Panc1 (cell line): ENCODE measurements at regions of chr6 and their contacts with region 1.

Region 1: DNA sequence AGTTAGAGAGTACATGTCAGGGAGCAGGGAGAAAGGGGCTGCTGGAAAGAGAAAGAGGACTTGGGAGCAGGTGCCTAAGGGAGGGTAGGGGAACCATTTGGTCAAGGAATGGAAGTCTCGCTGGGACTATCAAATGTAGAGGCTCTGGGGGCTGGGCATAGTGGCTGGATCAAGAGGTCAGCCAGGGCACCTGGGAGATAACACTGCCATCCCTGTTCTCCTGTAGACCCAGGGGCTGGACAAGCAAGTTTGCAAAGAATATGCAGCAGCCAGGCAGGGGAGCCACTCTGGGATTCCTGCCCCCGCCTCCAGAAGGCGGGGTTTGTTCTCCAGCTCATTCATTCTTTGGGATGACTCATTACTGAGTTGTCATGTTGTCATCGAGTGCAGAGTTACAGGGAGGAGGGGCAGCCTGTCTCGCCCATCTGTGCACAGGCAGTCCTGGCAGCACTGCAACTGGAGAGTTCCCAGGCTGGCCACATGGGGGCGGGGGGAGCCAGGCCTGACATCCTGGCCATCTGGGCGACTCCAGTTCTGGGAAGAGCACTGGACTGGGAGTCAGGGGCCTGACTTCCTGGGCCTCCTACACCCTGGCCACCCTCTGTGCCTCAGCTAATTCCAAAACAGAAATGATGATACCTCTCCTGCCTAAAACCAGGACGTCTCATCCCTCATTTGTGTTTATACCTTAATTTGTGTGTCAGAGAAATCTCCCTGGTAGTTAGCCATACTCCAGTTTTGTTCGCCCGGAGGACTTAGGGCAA is 28.2 kb upstream of the ZFAND3 start:
- DNase-seq: peak; percentile 86
- ATAC-seq: peak; percentile 98
- H3K4me3 ChIP-seq: no peak overlapping the region
- H3K27ac ChIP-seq: no peak overlapping the region
- H3K4me1 ChIP-seq: peaks cover 7% of the 10 kb centered on the region; the same call in 1 of the 2 replicates
- H3K27me3 ChIP-seq: no peaks in the 10 kb centered on the region
- CTCF ChIP-seq: peak; percentile 97

Region 2: GRCh38 chr6:37818536-37819176 is 27.3 kb after region 1 on chr6:
- CTCF ChIA-PET with region 1: interaction called, 5 read pairs
- POLR2A ChIA-PET with region 1: interaction called, 16 read pairs
- in situ Hi-C with region 1: no loop called
- intact Hi-C with region 1: no loop called
- DNase-seq: peak; percentile 48
- ATAC-seq: peak; percentile 82
- H3K4me3 ChIP-seq: peak overlapping the region; percentile 84 to 89
- H3K27ac ChIP-seq: peak overlapping the region; percentile 100
- H3K4me1 ChIP-seq: peaks cover 27% of the 10 kb centered on the region
- H3K27me3 ChIP-seq: no peaks in the 10 kb centered on the region
- CTCF ChIP-seq: no peak

Region 3: DNA sequence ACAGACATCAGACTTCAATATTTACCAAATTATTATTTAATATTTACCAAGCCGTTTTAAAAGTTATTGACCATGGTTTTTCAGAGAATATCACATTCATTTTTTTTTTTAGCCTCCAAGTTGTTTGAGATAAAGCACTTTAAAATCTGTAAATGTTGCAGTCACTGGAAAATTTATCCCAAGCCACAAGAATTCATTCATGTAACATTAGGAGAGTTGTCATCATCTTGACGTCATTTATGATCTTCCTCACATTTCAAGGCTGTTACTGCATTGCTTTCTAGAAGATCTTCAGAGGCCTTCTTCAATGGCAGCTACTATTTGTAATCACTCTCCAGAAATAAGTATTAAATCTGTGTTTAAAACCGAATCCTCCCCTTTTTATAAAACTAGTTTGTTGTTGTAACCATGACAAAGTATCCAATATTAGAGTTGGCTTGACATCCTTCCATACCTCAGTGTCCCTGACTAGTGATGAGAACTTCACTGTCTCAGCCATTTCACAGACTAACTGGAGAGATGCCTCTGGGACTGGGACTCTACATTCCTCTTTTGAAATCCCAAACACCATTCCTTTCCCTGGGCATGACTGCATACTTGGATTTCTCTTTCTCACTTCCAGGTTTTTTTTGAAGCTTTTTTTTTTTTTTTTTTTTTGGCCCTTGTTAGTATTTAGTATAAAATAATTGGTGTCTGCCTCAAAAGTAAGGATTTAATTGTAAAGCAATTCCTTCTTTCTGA is 128.2 kb after region 1 on chr6:
- CTCF ChIA-PET with region 1: no interaction called
- POLR2A ChIA-PET with region 1: no interaction called
- in situ Hi-C with region 1: no loop called
- intact Hi-C with region 1: no loop called
- DNase-seq: no peak
- ATAC-seq: no peak
- H3K4me3 ChIP-seq: no peak overlapping the region
- H3K27ac ChIP-seq: no peak overlapping the region
- H3K4me1 ChIP-seq: peaks cover 7% of the 10 kb centered on the region; the same call in 1 of the 2 replicates
- H3K27me3 ChIP-seq: no peaks in the 10 kb centered on the region
- CTCF ChIP-seq: no peak

Region 4: DNA sequence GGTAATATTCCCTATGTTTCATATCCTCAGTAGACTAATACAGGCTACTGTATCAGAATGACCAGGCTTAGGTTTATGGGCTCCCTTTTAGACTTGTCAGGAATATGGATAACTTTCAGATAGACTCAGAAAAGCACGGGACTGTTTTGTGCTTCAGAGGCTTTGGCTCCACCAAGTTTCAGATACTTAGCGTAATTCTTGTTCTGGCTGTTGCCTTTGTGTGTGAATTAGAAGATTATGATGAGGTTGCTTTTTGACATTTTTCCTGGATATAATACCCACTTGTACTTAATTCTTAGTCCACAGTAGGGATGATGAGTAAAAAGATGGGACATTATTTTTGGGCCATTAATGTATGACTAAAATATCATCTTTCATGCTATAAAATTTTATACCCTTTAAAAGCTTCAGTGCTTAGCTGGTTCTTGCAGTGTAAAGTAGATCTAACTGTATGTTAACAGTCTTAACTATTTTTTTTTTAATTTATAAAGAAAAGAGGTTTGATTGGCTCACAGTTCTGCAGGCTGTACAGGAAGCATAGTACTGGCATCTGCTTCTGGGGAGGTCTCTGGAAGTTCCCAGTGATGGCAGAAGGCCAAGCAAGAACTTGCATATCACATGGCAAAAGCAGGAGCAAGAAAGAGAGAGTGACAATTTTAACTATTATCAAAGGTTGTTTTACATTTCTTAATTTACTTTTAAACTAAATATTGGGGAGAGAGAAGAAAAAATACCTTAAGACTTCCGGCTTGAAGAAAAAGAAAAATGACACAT is 148.9 kb after region 1 on chr6:
- CTCF ChIA-PET with region 1: no interaction called
- POLR2A ChIA-PET with region 1: no interaction called
- in situ Hi-C with region 1: no loop called
- intact Hi-C with region 1: no loop called
- DNase-seq: no peak
- ATAC-seq: no peak
- H3K4me3 ChIP-seq: no peak overlapping the region
- H3K27ac ChIP-seq: no peak overlapping the region
- H3K4me1 ChIP-seq: peaks cover 4% of the 10 kb centered on the region; the same call in 1 of the 2 replicates
- H3K27me3 ChIP-seq: no peaks in the 10 kb centered on the region
- CTCF ChIP-seq: no peak

Region 5: DNA sequence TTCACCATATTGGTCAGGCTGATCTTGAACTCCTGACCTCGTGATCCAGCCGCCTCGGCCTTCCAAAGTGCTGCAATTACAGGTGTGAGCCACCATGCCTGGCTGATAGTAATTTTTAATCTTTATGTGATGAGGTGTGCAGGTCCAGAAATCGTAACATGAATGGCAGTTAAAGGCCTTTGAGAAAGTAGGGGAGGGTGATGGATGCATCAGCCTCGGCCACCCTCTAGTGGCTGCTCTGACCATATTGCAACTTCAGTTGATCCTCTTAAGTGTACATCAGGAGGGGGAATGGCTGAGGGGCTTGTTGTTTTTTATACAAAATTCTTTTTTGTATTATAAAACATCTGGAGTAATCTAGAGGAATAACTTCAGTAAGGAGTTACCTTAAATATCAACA is 221.2 kb after region 1 on chr6:
- CTCF ChIA-PET with region 1: interaction called, 4 read pairs
- POLR2A ChIA-PET with region 1: no interaction called
- in situ Hi-C with region 1: no loop called
- intact Hi-C with region 1: loop called (anchors 10 kb)
- DNase-seq: peak; percentile 25
- ATAC-seq: peak; percentile 98
- H3K4me3 ChIP-seq: no peak overlapping the region
- H3K27ac ChIP-seq: no peak overlapping the region
- H3K4me1 ChIP-seq: no peaks in the 10 kb centered on the region
- H3K27me3 ChIP-seq: no peaks in the 10 kb centered on the region
- CTCF ChIP-seq: peak; percentile 91

Region 6: GRCh38 chr6:38027685-38028373 is 236.5 kb after region 1 on chr6:
- CTCF ChIA-PET with region 1: no interaction called
- POLR2A ChIA-PET with region 1: interaction called, 21 read pairs
- in situ Hi-C with region 1: no loop called
- intact Hi-C with region 1: no loop called
- DNase-seq: no peak
- ATAC-seq: no peak
- H3K4me3 ChIP-seq: no peak overlapping the region
- H3K27ac ChIP-seq: no peak overlapping the region
- H3K4me1 ChIP-seq: no peaks in the 10 kb centered on the region; the same call in 1 of the 2 replicates
- H3K27me3 ChIP-seq: no peaks in the 10 kb centered on the region
- CTCF ChIP-seq: no peak

Region 7: DNA sequence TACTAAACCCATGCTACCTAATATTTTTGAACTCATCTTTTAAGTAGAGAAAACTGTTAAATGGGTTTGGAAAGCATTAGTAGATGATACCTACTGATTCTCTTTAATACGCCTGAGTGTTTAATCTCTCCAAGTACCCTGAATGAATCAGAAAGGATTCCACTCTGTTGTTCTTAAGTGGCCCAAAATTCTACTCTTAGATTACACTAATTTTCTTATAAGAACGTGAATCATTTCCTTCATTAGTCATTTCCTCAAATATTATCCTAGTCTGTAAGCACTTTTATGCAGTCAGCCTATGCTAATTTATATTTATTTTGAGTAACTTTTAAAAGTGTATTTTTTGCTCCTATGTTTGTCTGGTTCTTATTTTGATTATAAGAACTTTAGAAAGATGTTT is 468.4 kb after region 1 on chr6:
- CTCF ChIA-PET with region 1: no interaction called
- POLR2A ChIA-PET with region 1: no interaction called
- in situ Hi-C with region 1: no loop called
- intact Hi-C with region 1: no loop called
- DNase-seq: no peak
- ATAC-seq: no peak
- H3K4me3 ChIP-seq: no peak overlapping the region
- H3K27ac ChIP-seq: no peak overlapping the region; the same call in 1 of the 2 replicates
- H3K4me1 ChIP-seq: peaks cover 31% of the 10 kb centered on the region
- H3K27me3 ChIP-seq: no peaks in the 10 kb centered on the region
- CTCF ChIP-seq: no peak